HCT116 (cell line): ENCODE measurements at regions of chr9 and their contacts with region 1.

Region 1: GRCh38 chr9:101530077-101530711 is 3.5 kb upstream of the RNF20 start:
- DNase-seq: peak; percentile 75
- ATAC-seq: peak; percentile 54
- H3K4me3 ChIP-seq: no peak overlapping the region
- H3K27ac ChIP-seq: no peak overlapping the region
- H3K4me1 ChIP-seq: peaks cover 0 to 14% of the 10 kb centered on the region in 2 experiments; a peak in 3 of 4 replicates
- H3K27me3 ChIP-seq: no peaks in the 10 kb centered on the region
- CTCF ChIP-seq: peak; percentile 73 to 93 (median 81)
- POLR2A ChIP-seq: no peak
- RAD21 ChIP-seq: peak; percentile 80

Region 2: GRCh38 chr9:101398068-101398929 is 131.9 kb before region 1 on chr9 and contains the starts of genes MRPL50 and ZNF189:
- CTCF ChIA-PET with region 1: no interaction called
- POLR2A ChIA-PET with region 1: no interaction called
- RAD21 ChIA-PET with region 1: no interaction called
- intact Hi-C with region 1: loop called (anchors 5 kb)
- DNase-seq: peak; percentile 96
- ATAC-seq: peak; percentile 96
- H3K4me3 ChIP-seq: peak within 1 kb of the TSS; percentile 71 to 92
- H3K27ac ChIP-seq: peak within 1 kb of the TSS; percentile 44
- H3K4me1 ChIP-seq: peaks cover 3 to 10% of the 10 kb centered on the region in 2 experiments; a peak in 3 of 4 replicates
- H3K27me3 ChIP-seq: no peaks in the 10 kb centered on the region
- CTCF ChIP-seq: no peak
- POLR2A ChIP-seq: peak; percentile 79
- RAD21 ChIP-seq: no peak
- total RNA-seq, gene MRPL50: 14.6 TPM
- total RNA-seq, gene ZNF189: 10.6 TPM

Region 3: GRCh38 chr9:101449140-101449721 is 81.0 kb before region 1 on chr9:
- CTCF ChIA-PET with region 1: interaction called, 36 read pairs
- POLR2A ChIA-PET with region 1: no interaction called
- RAD21 ChIA-PET with region 1: no interaction called
- intact Hi-C with region 1: loop called (anchors 2 kb)
- DNase-seq: peak; percentile 83
- ATAC-seq: peak; percentile 98
- H3K4me3 ChIP-seq: peak overlapping the region; percentile 48 to 60
- H3K27ac ChIP-seq: peak overlapping the region; percentile 51; the same call in 1 of the 2 replicates
- H3K4me1 ChIP-seq: peaks cover 0 to 6% of the 10 kb centered on the region in 2 experiments; a peak in 2 of 4 replicates
- H3K27me3 ChIP-seq: no peaks in the 10 kb centered on the region
- CTCF ChIP-seq: peak; percentile 57 to 96 (median 72)
- POLR2A ChIP-seq: no peak
- RAD21 ChIP-seq: peak; percentile 67

Region 4: DNA sequence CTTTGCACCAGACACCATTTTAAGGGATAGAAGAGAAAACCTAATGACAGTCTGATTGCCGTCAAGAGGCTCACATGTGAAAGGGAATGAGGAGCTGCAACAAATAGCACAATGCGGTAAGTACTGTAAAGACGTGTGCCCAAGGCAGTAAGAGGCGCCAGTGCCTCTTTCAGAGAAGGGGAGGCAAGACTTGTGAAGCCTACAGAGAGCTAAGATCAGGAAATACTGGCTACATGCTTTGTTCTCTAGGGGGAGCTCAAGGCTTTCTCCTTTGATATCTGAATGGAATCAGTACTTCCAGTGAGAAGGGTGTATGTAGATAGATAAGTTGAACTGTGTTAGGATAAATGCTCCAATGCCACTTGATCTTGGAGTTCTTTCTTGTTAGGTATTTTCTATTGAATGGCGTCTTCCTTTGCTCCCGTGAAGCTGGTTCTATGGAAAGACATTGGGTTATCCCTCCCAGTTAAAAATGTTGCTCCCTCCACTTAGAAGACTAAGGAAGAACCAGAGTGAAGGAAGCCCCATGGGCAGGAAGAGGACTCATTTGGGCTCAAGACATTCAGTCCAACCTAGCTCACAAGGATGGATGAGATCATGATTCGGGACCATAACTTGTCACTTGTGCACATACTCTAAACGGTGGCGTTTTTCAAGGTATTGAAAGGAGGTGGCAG is 71.1 kb before region 1 on chr9:
- CTCF ChIA-PET with region 1: interaction called, 52 read pairs
- POLR2A ChIA-PET with region 1: interaction called, 8 read pairs
- RAD21 ChIA-PET with region 1: interaction called, 3 to 8 read pairs
- intact Hi-C with region 1: loop called (anchors 1 kb)
- DNase-seq: peak; percentile 79
- ATAC-seq: peak; percentile 97
- H3K4me3 ChIP-seq: no peak overlapping the region
- H3K27ac ChIP-seq: no peak overlapping the region
- H3K4me1 ChIP-seq: peaks cover 11 to 23% of the 10 kb centered on the region in 2 experiments; a peak in 3 of 4 replicates
- H3K27me3 ChIP-seq: no peaks in the 10 kb centered on the region
- CTCF ChIP-seq: peak; percentile 72 to 93 (median 79)
- POLR2A ChIP-seq: no peak
- RAD21 ChIP-seq: peak; percentile 85

Region 5: GRCh38 chr9:101486693-101487442 is 43.3 kb before region 1 on chr9:
- CTCF ChIA-PET with region 1: interaction called, 4 read pairs
- POLR2A ChIA-PET with region 1: no interaction called
- RAD21 ChIA-PET with region 1: no interaction called
- intact Hi-C with region 1: loop called (anchors 2 kb)
- DNase-seq: peak; percentile 51
- ATAC-seq: peak; percentile 84
- H3K4me3 ChIP-seq: peak overlapping the region; percentile 69 to 82
- H3K27ac ChIP-seq: peak overlapping the region; percentile 92
- H3K4me1 ChIP-seq: peaks cover 10 to 20% of the 10 kb centered on the region in 2 experiments; a peak in 3 of 4 replicates
- H3K27me3 ChIP-seq: no peaks in the 10 kb centered on the region
- CTCF ChIP-seq: peak in 2 of 3 experiments; percentile 36 to 42; a peak in 2 of 6 replicates
- POLR2A ChIP-seq: peak; percentile 32
- RAD21 ChIP-seq: peak; percentile 47; the same call in 1 of the 2 replicates